Testis (tissue), 5 donors: ENCODE measurements at regions of chr10 and their contacts with region 1.

Region 1: GRCh38 chr10:58781873-58782488 is 269.3 kb downstream of the BICC1 start:
- DNase-seq: no peak
- H3K4me3 ChIP-seq: no peak overlapping the region
- H3K27ac ChIP-seq: no peak overlapping the region
- H3K4me1 ChIP-seq: no peaks in the 10 kb centered on the region
- H3K27me3 ChIP-seq: no peaks in the 10 kb centered on the region
- CTCF ChIP-seq: peak; percentile 37 to 63 (median 61)
- POLR2A ChIP-seq: no peak

Region 2: DNA sequence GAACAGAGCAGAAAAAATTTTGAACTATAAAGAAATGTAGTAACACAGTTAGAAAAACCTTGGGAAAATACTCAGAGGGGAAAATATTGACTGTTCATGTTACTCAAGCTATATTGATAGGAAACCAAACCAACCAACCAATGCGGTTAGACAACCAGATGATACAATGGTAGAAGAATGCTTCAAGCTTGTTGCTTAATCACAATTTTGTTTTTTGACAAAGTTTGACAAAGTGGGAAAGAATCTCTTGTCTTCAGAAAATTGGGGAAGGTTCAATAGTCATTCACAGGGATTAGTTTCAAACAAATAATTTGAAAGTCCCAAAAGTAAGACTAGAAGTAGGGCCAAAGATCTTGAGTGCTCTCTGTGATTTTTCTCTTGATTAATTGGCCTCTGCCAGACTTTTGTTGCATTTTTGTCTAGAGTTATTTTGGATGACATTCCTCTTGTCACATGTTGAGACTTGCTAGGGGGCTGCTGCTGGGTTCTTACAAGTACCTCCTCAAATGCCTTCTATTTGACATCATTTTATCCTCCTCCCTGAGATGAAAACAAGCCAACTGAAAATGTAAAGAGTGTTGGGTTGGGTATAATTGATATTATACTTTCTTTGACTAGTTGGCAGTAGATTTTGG is 161.4 kb after region 1 on chr10:
- intact Hi-C with region 1: loop called (anchors 10 kb)
- DNase-seq: no peak
- H3K4me3 ChIP-seq: no peak overlapping the region
- H3K27ac ChIP-seq: no peak overlapping the region
- H3K4me1 ChIP-seq: peaks cover 11% of the 10 kb centered on the region
- H3K27me3 ChIP-seq: no peaks in the 10 kb centered on the region
- CTCF ChIP-seq: no peak
- POLR2A ChIP-seq: no peak